ENCODE measurements at regions of chr17 and their contacts with region 1.

Region 1: GRCh38 chr17:4420692-4421131 is 13.0 kb upstream of the SPNS3 start:
- DNase-seq: peak; percentile 27 to 91 (median 76)

Region 2: DNA sequence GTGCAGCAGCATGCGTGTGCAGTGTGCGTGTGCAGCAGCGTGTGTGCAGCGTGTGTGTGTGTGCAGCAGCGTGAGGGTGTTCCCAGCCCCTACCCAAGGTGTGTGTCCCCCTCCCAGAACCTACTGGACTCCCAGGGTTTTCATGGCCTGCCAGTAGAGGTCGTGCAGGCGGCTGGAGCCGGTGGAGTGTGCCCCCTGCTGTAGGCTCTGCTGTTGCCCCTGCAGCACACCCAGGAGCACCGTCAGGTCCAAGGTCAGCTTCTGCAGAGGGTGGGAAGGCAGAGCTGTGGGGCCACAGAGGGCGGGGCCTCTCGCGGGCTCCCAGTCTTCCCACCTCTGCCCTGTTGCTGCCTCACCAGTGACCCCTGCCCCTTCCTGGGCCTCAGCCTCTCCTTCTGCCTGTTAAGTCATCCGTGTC is 119.5 kb after region 1 on chr17:
- intact Hi-C with region 1: loop called (anchors 2 kb)
- DNase-seq: peak in 1 of 42 donors; percentile 61

Region 3: DNA sequence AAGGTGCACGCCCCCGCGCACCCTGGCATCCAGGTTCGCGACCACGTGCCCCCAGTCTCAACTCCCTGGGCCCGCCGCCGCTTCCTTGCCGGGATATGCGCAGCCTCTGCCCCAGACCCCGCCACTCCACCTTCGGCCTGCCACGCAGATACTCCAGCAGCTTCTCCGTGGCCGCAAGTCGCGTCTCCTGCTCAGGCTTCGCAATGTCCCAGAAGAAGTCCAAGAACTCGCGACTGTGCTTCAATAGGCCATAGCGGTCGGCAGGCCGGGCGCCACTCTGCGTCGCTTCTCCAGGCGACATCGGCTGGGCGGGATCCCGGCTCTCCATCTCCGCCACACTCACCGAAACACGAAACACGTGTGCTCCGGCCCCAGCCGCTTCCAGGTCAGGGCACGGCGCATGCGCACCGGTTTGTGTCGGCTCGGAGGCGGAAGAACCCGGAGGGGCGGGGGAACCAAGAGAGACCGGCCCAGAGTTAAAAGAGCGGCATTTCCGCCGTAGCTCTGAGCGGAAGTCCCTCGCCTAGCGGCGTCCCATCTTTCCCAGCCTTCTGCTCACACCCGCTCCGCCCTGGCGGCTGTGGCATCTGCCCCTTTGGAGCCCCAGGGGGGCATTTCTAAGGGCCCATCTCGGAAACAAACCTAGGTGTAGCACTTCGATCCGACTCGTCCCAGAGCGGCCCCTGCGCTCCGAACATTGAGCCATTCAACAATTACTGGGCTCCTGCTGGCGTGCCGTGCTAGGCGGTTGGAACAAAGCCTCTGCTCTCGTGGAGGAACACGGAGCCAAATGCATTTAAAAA is 134.5 kb after region 1 on chr17 and contains the start of gene MYBBP1A:
- intact Hi-C with region 1: loop called (anchors 5 kb)
- DNase-seq: peak; percentile 91 to 99 (median 97)

Region 4: DNA sequence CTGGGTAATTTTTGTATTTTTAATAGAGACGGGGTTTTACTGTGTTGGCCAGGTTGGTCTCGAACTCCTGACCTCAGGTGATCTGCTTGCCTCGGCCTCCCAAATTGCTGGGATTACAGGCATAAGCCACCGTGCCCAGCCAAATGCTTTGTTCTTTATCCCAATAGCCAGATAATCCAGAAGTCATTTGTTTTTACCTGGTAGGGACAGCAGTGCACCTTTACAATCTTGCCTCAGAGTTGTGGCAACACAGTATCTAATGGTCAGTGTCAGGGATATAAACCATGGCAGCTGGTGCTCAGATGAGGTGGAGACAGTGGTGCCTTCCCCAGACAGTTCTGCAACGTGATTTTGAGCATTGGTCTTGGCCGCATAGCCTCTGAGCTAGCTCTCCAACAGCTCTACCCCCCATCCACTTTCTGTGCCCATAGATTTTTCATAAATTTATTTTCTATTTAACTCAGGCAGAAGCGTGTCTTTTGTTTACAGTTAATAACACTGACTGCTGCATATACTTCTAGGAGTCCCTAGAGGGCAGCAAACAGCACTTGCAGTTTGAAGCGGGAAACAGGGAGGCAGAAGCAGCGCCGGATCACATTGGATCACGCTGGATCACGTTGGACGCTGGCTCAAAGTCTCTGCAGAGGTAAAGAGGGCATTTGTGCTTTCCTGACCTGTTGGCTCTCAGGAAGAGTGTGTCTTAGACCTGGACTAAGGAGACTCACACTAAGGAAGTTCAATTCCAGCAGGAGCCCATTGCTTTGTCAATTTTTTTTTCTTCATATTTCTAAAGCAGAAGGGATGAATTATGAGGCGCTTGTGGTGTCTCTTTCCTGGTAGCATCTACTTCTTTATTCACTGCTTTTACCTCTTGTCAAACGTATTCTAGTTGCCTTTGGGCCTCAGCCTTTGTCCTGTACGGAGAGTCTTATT is 144.8 kb after region 1 on chr17:
- intact Hi-C with region 1: no loop called
- DNase-seq: peak; percentile 50 to 89 (median 75)

Region 5: GRCh38 chr17:4607773-4608187 is 187.1 kb after region 1 on chr17:
- intact Hi-C with region 1: no loop called
- DNase-seq: peak in 34 of 42 donors; percentile 18 to 71 (median 40)